Dendritic cell treated with granulocyte-macrophage colony-stimulating factor and Interleukin-4, amounts not matched to agents 40 ng/mL and 50 ng/mL, for 4 days (primary cell): ENCODE measurements at regions of chr11 and their contacts with region 1.

Region 1: DNA sequence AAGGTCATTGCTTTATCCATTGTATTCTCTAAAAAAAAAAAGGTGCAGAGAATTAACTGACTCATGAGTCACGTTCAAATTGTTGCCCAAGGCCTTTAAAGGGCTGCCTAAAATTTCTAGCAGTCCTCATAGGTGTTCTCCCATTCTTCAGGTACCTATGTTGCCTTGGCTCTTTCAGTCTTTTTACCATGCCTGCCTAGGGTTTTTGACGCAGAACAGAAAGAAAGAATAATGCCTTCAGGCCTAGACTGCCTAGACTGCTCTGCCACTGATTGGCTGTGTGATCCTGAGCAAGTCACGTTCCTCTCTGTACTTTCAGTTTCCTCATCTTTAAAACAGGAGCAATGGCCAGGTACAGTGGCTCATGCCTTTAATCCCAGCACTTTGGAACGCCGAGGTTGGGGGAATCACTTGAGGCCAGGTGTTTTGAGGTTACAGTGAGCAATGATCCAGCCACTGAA is 21.5 kb downstream of the CTSC start:
- H3K4me3 Mint-ChIP-seq: no peak overlapping the region
- H3K27ac Mint-ChIP-seq: peak overlapping the region; percentile 52
- H3K4me1 Mint-ChIP-seq: peaks cover 53% of the 10 kb centered on the region
- H3K27me3 Mint-ChIP-seq: no peaks in the 10 kb centered on the region

Region 2: GRCh38 chr11:88301488-88302140 is 14.4 kb before region 1 on chr11:
- intact Hi-C with region 1: loop called (anchors 2 kb)
- H3K4me3 Mint-ChIP-seq: no peak overlapping the region
- H3K27ac Mint-ChIP-seq: peak overlapping the region; percentile 76
- H3K4me1 Mint-ChIP-seq: peaks cover 81% of the 10 kb centered on the region
- H3K27me3 Mint-ChIP-seq: no peaks in the 10 kb centered on the region